ENCODE measurements at regions of chr6 and their contacts with region 1.

Region 1: DNA sequence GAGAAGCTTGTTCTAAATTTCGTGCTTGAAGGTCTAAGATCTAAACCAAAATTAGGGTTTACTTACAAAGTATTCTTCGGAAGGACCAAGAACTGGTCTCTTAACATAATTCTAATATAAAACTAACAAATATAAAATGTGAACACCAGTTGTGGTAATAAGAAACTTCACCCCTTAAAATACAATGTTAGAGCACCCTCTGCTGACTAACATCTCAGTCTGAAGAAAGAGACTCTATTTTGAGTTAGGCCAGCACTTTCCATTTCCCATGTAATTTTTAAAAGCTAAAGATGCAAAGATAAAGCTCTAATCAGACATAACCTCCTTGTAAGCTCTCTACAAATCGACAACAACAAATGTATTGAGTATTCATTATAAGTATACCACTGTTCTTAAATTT is 24.6 kb downstream of the ATG5 start:
- DNase-seq: peak in 2 of 4 experiments; percentile 17 to 38
- ATAC-seq: peak; percentile 72
- H3K4me3 ChIP-seq: no peak overlapping the region
- H3K27ac ChIP-seq: no peak overlapping the region
- H3K4me1 ChIP-seq: no peaks in the 10 kb centered on the region
- H3K27me3 ChIP-seq: no peaks in the 10 kb centered on the region
- CTCF ChIP-seq: peak in 2 of 3 experiments; percentile 35 to 55; a peak in 4 of 6 replicates
- EP300 ChIP-seq: no peak
- POLR2A ChIP-seq: no peak
- RAD21 ChIP-seq: peak; percentile 64 to 70

Region 2: GRCh38 chr6:106037060-106037459 is 263.9 kb before region 1 on chr6:
- CTCF ChIA-PET with region 1: no interaction called
- POLR2A ChIA-PET with region 1: no interaction called
- in situ Hi-C with region 1: no loop called
- intact Hi-C with region 1: no loop called
- DNase-seq: no peak
- ATAC-seq: no peak
- H3K4me3 ChIP-seq: no peak overlapping the region
- H3K27ac ChIP-seq: no peak overlapping the region
- H3K4me1 ChIP-seq: no peaks in the 10 kb centered on the region
- H3K27me3 ChIP-seq: peaks cover 0 to 2% of the 10 kb centered on the region in 2 experiments; a peak in 2 of 5 replicates
- CTCF ChIP-seq: no peak
- EP300 ChIP-seq: no peak
- POLR2A ChIP-seq: no peak
- RAD21 ChIP-seq: no peak

Region 3: DNA sequence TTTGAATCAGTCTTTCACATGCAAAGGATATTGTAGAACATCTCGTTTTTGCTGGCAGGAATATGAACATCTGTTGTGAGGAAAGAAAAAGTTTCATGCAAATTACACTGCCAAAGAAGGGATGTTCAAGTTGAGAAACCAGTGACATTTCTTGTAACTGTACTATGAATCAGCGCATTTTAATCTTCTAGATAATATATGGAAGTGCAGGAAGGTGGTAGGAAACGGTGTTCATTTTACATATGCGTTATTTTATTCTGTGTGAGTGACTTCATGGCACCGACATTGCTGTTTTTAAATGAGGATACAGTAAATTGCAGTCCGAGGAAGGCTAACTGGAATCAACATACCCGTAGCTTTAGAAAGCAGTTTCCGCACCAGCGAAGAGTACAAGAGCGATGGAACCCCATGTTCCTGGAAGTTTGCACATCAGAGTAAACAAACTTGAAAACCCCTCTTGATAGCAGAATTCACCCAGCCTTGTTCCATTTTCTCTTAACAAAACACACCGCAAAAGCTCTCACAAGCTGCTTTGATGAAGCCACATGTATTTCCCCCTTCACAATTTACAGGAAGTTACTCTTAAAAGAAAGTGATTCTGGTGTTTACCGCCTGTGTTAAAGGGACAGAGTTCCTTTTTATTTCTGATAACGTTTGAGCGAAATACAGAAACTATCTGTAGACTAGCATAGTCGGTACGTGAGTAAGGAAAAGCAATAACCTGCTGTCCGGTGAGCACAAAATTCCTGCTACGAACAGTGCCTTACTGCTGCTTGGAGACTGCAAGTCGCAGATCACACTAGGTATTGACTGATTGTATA is 203.3 kb before region 1 on chr6:
- CTCF ChIA-PET with region 1: no interaction called
- POLR2A ChIA-PET with region 1: no interaction called
- in situ Hi-C with region 1: loop called (anchors 5 kb)
- intact Hi-C with region 1: no loop called
- DNase-seq: peak in 2 of 4 experiments; percentile 20 to 56
- ATAC-seq: peak; percentile 68
- H3K4me3 ChIP-seq: peak overlapping the region; percentile 31
- H3K27ac ChIP-seq: peak overlapping the region; percentile 81
- H3K4me1 ChIP-seq: peaks cover 10 to 25% of the 10 kb centered on the region in 2 experiments; a peak in 4 of 5 replicates
- H3K27me3 ChIP-seq: no peaks in the 10 kb centered on the region
- CTCF ChIP-seq: no peak
- EP300 ChIP-seq: peak; percentile 44; the same call in 1 of the 2 replicates
- POLR2A ChIP-seq: peak; percentile 54
- RAD21 ChIP-seq: no peak

Region 4: DNA sequence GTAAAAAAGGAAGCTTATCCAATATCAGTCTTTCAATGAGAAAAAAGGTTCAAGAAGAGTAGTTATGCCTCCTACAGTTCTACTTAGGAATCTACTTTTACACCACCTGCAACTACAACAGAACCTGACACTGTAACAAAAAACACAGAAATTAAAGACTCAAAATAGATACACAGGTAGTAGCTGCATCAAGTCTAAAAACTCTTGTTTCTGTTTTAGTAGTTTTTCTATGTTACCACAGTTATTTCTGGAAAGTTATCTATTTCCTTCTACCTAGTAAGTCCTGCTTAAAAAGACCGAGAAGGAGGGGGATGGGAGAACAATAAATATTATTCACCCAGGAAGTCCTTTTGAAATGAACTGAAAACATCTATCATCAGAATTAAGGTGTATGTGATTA is 27.9 kb before region 1 on chr6:
- CTCF ChIA-PET with region 1: no interaction called
- POLR2A ChIA-PET with region 1: no interaction called
- in situ Hi-C with region 1: no loop called
- intact Hi-C with region 1: no loop called
- DNase-seq: no peak
- ATAC-seq: no peak
- H3K4me3 ChIP-seq: no peak overlapping the region
- H3K27ac ChIP-seq: no peak overlapping the region
- H3K4me1 ChIP-seq: no peaks in the 10 kb centered on the region; a peak in 1 of 5 replicates
- H3K27me3 ChIP-seq: no peaks in the 10 kb centered on the region
- CTCF ChIP-seq: peak in 1 of 3 experiments; percentile 12; a peak in 1 of 6 replicates
- EP300 ChIP-seq: no peak
- POLR2A ChIP-seq: no peak
- RAD21 ChIP-seq: no peak

Region 5: GRCh38 chr6:106315765-106316374 is 14.9 kb after region 1 on chr6:
- CTCF ChIA-PET with region 1: no interaction called
- POLR2A ChIA-PET with region 1: no interaction called
- in situ Hi-C with region 1: no loop called
- intact Hi-C with region 1: no loop called
- DNase-seq: peak in 3 of 4 experiments; percentile 15 to 81 (median 31)
- ATAC-seq: peak; percentile 34
- H3K4me3 ChIP-seq: no peak overlapping the region
- H3K27ac ChIP-seq: peak overlapping the region; percentile 24; the same call in 2 of the 3 replicates
- H3K4me1 ChIP-seq: peaks cover 19 to 63% of the 10 kb centered on the region in 2 experiments
- H3K27me3 ChIP-seq: no peaks in the 10 kb centered on the region
- CTCF ChIP-seq: no peak
- EP300 ChIP-seq: peak; percentile 79
- POLR2A ChIP-seq: no peak
- RAD21 ChIP-seq: no peak

Region 6: DNA sequence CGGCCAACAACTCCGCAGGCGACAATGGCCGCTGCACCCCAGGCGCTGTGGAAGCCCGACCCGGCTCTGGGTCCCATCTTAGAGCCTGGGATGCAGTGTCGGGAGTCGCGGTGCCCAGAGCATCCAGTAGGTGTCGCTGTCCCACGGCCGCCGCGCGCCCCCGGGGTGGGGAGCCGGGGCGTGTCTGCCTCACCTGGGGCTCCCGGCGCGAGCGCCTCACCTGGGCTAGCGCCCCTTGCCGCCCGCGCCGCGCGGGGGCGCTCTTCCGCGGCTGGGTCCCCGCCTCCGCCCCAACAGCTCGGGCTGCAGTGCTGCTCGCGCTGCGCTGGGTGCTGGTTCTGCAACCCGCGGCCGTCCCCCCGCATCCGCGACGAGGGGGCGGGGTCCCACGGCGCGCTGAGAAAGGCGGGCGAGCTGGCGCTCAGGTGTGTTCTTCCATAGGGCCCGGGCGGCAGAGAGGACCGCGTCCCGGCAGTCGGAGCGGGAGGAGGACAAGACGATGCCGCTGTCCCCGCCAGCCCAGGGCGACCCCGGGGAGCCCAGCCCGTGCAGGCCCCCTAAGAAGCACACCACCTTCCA is 59.6 kb after region 1 on chr6 and contains the start of gene CRYBG1:
- CTCF ChIA-PET with region 1: no interaction called
- POLR2A ChIA-PET with region 1: no interaction called
- in situ Hi-C with region 1: no loop called
- intact Hi-C with region 1: no loop called
- DNase-seq: peak; percentile 74 to 93 (median 88)
- ATAC-seq: peak; percentile 99
- H3K4me3 ChIP-seq: no peak within 1 kb of the TSS; the same call in 1 of the 2 replicates
- H3K27ac ChIP-seq: no peak within 1 kb of the TSS
- H3K4me1 ChIP-seq: peaks cover 0 to 13% of the 10 kb centered on the region in 2 experiments; a peak in 3 of 5 replicates
- H3K27me3 ChIP-seq: peaks cover 7 to 22% of the 10 kb centered on the region in 2 experiments; a peak in 3 of 5 replicates
- CTCF ChIP-seq: peak; percentile 68 to 92 (median 80)
- EP300 ChIP-seq: no peak
- POLR2A ChIP-seq: no peak
- RAD21 ChIP-seq: peak in 1 of 2 experiments; percentile 53; a peak in 2 of 4 replicates
- polyA plus RNA-seq, gene CRYBG1: 0.07 to 0.08 TPM